ENCODE measurements at regions of chr10 and their contacts with region 1.

Region 1: GRCh38 chr10:34696423-34696822 is 118.7 kb downstream of the PARD3 start:
- DNase-seq: no peak
- H3K4me3 Mint-ChIP-seq: no peak overlapping the region
- H3K27ac Mint-ChIP-seq: no peak overlapping the region
- H3K4me1 Mint-ChIP-seq: peaks cover 7% of the 10 kb centered on the region
- H3K27me3 Mint-ChIP-seq: peaks cover 11% of the 10 kb centered on the region

Region 2: DNA sequence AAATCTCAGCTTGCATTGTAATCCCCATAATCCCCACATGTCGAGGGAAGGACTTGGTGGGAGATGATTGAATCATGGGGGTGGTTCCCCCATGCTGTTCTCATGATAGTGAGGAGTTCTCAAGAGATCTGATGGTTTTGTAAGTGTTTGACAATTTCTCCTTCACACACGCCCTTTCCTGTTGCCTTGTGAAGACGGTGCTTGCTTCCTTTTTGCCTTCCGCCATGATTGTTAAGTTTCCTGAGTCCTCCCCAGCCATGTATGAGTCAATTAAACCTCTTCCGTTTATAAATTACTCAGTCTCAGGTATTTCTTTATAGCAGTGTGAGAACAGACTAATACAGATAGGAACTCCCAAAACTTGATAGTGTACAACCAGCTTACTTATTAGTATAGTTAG is 528.8 kb after region 1 on chr10:
- CTCF ChIA-PET with region 1: no interaction called
- intact Hi-C with region 1: loop called (anchors 10 kb)
- DNase-seq: no peak
- H3K4me3 Mint-ChIP-seq: no peak overlapping the region
- H3K27ac Mint-ChIP-seq: no peak overlapping the region
- H3K4me1 Mint-ChIP-seq: peaks cover 9% of the 10 kb centered on the region
- H3K27me3 Mint-ChIP-seq: no peaks in the 10 kb centered on the region